ENCODE measurements at regions of chr2 and their contacts with region 1.

Region 1: DNA sequence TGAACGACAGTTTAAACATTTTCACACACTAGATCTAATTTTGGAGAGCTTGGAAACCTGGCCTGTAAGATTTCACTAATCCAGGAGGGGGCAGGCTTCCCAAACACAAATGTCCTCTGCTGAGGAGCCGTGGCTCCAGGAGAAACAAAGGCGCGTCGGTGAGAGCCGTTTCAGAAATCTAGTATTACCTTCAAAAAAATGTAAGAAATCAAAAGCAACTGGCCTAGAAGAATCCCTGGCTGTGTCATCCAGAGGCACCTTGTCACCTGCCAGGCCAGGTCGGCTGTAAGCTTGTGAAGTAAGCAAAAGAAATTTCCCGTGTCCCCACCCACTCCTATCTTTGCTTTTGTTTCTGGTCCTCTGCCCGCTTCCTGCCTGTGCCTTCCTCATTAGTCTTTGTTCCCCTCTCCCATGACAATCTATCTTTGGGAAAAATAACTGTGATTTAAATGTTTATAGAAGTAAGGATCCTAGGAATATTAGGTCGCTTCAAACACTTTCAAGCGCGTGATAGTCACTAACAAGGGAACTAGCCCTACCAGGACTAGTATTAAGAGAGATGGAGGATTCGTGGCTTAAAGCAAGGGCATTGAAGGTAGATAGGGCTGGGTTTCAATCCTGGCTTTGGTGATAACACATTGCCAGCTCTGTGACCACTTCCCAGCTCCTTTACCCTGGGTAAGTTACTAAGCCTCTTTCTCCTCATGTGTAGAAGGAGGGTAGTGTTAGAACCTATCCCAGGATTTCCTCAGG is 99.5 kb upstream of the STK39 start:
- DNase-seq: peak; percentile 45
- ATAC-seq: peak; percentile 92
- H3K4me3 ChIP-seq: peak overlapping the region; percentile 52; the same call in 1 of the 2 replicates
- H3K27ac ChIP-seq: no peak overlapping the region
- H3K4me1 ChIP-seq: peaks cover 9% of the 10 kb centered on the region
- H3K27me3 ChIP-seq: no peaks in the 10 kb centered on the region
- CTCF ChIP-seq: peak; percentile 64 to 86 (median 69)
- EP300 ChIP-seq: no peak
- POLR2A ChIP-seq: no peak
- RAD21 ChIP-seq: peak; percentile 98

Region 2: DNA sequence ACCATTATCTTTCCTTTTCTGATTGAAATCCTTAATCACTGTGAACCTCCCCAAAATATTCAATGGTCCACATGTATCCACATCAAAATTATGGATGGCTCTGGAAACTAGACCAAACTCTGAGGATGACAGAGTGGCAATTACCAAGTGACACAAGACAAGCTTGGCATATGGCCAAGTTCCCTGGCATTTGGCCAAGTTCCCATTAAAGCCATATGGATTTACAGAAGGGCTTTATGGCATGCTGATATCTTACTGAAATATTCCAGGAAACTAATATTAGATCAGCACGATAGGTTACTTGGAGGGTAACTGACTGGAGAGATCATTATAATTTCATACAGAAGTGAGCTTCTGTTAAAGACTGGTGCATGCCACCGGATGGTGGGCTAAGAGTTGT is 87.2 kb after region 1 on chr2:
- CTCF ChIA-PET with region 1: no interaction called
- POLR2A ChIA-PET with region 1: no interaction called
- RAD21 ChIA-PET with region 1: no interaction called
- SMC1A ChIA-PET with region 1: no interaction called
- in situ Hi-C with region 1: no loop called
- intact Hi-C with region 1: loop called (anchors 2 kb)
- DNase-seq: no peak
- ATAC-seq: no peak
- H3K4me3 ChIP-seq: no peak overlapping the region
- H3K27ac ChIP-seq: no peak overlapping the region
- H3K4me1 ChIP-seq: peaks cover 13% of the 10 kb centered on the region; the same call in 1 of the 2 replicates
- H3K27me3 ChIP-seq: no peaks in the 10 kb centered on the region
- CTCF ChIP-seq: no peak
- EP300 ChIP-seq: no peak
- POLR2A ChIP-seq: no peak
- RAD21 ChIP-seq: no peak

Region 3: GRCh38 chr2:168490015-168490874 is 143.3 kb after region 1 on chr2:
- CTCF ChIA-PET with region 1: interaction called, 3 read pairs
- POLR2A ChIA-PET with region 1: no interaction called
- RAD21 ChIA-PET with region 1: interaction called, 7 read pairs
- SMC1A ChIA-PET with region 1: interaction called, 3 read pairs
- in situ Hi-C with region 1: no loop called
- intact Hi-C with region 1: loop called (anchors 2 kb)
- DNase-seq: peak; percentile 92
- ATAC-seq: peak; percentile 95
- H3K4me3 ChIP-seq: peak overlapping the region; percentile 64
- H3K27ac ChIP-seq: peak overlapping the region; percentile 99
- H3K4me1 ChIP-seq: peaks cover 25% of the 10 kb centered on the region
- H3K27me3 ChIP-seq: no peaks in the 10 kb centered on the region
- CTCF ChIP-seq: no peak
- EP300 ChIP-seq: peak; percentile 85 to 87; a peak in 3 of 4 replicates
- POLR2A ChIP-seq: peak; percentile 42
- RAD21 ChIP-seq: peak; percentile 41; the same call in 1 of the 2 replicates

Region 4: GRCh38 chr2:168687314-168687713 is 340.4 kb after region 1 on chr2:
- CTCF ChIA-PET with region 1: interaction called, 21 read pairs
- POLR2A ChIA-PET with region 1: no interaction called
- RAD21 ChIA-PET with region 1: interaction called, 16 read pairs
- SMC1A ChIA-PET with region 1: interaction called, 16 read pairs
- in situ Hi-C with region 1: no loop called
- intact Hi-C with region 1: loop called (anchors 1 kb)
- DNase-seq: no peak
- ATAC-seq: peak; percentile 58
- H3K4me3 ChIP-seq: no peak overlapping the region
- H3K27ac ChIP-seq: no peak overlapping the region
- H3K4me1 ChIP-seq: peaks cover 5% of the 10 kb centered on the region; the same call in 1 of the 2 replicates
- H3K27me3 ChIP-seq: no peaks in the 10 kb centered on the region
- CTCF ChIP-seq: peak; percentile 12 to 43 (median 25); a peak in 4 of 6 replicates
- EP300 ChIP-seq: no peak
- POLR2A ChIP-seq: no peak
- RAD21 ChIP-seq: peak; percentile 62

Region 5: GRCh38 chr2:168705534-168706470 is 358.9 kb after region 1 on chr2:
- CTCF ChIA-PET with region 1: interaction called, 40 read pairs
- POLR2A ChIA-PET with region 1: no interaction called
- RAD21 ChIA-PET with region 1: interaction called, 11 read pairs
- SMC1A ChIA-PET with region 1: interaction called, 11 read pairs
- in situ Hi-C with region 1: loop called (anchors 5 kb)
- intact Hi-C with region 1: loop called (anchors 1 kb)
- DNase-seq: no peak
- ATAC-seq: peak; percentile 65
- H3K4me3 ChIP-seq: no peak overlapping the region
- H3K27ac ChIP-seq: no peak overlapping the region
- H3K4me1 ChIP-seq: peaks cover 3% of the 10 kb centered on the region
- H3K27me3 ChIP-seq: no peaks in the 10 kb centered on the region
- CTCF ChIP-seq: peak; percentile 30 to 45 (median 35); a peak in 4 of 6 replicates
- EP300 ChIP-seq: no peak
- POLR2A ChIP-seq: no peak
- RAD21 ChIP-seq: peak; percentile 61

Region 6: DNA sequence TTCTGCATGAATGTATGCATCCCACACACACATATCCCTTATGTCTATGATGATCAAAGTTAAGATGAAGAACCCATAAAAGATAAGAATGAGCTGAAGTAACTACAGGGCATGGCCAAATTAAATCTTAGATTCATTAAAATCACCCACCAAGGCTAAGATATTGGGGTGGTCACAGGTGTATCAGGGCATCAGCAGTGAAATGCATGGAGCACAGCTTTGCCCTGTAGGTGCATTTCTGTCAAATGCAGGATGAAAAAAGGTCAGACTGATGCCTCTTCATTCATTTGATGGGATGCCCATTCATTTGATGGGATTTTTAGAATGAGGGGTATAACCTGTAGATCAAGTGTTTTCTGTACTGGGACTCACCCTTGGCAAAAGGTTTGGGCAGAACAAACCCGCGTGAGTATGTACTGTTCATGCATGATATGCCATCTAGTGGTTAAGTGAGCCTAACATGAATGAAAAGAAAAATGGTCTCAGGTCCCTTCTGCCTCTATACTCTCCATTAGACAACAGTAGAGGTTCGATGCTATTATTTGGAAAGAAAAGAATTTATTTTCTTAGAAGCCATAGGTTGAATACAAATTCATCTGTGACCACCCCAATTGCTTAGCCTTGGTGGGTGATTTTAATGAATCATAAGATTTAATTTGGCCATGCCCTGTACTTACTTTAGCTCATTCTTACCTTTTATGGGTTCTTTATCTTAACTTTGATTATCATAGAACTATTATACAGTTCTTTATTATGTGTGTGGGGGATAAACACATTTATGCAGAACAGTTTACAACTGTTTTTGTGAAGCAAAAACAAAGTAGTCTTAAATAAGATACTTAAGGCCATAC is 412.3 kb after region 1 on chr2:
- CTCF ChIA-PET with region 1: interaction called, 27 read pairs
- POLR2A ChIA-PET with region 1: no interaction called
- RAD21 ChIA-PET with region 1: interaction called, 14 read pairs
- SMC1A ChIA-PET with region 1: interaction called, 35 read pairs
- in situ Hi-C with region 1: loop called (anchors 5 kb)
- intact Hi-C with region 1: loop called (anchors 1 kb)
- DNase-seq: peak; percentile 16
- ATAC-seq: peak; percentile 96
- H3K4me3 ChIP-seq: no peak overlapping the region
- H3K27ac ChIP-seq: no peak overlapping the region
- H3K4me1 ChIP-seq: peaks cover 5% of the 10 kb centered on the region; the same call in 1 of the 2 replicates
- H3K27me3 ChIP-seq: no peaks in the 10 kb centered on the region
- CTCF ChIP-seq: peak; percentile 52 to 68 (median 55); a peak in 5 of 6 replicates
- EP300 ChIP-seq: no peak
- POLR2A ChIP-seq: no peak
- RAD21 ChIP-seq: peak; percentile 83

Region 7: DNA sequence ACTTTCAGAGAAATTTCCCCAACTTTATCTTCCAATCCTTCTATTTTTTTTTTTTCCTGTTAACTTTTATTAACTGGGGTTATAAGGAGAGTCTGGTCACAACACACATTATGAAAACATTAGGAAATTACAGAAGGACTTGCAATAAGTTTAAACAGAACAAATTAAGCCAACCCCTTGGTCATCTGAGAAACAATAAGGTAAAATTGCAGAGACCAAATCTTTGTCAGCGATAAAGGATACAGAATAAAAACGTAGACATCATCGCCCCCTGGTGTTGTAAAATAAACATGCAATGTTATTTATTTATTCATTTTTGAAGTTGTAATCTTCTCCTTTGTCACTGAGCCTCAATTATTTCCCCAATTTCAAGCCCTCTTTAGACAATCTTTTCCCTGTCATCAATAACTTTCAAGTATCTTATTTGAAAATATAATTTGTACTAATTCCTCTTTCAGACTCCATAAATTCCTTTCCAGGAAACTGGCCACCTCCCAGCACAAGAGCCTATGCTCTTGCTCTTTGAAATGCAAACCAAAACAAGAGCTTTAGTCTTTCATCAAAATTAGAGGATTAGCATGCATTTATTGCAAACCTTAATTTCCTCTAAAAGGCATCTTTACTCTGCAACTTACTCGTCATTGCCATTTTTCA is 573.7 kb after region 1 on chr2:
- CTCF ChIA-PET with region 1: interaction called, 21 read pairs
- POLR2A ChIA-PET with region 1: no interaction called
- RAD21 ChIA-PET with region 1: interaction called, 4 read pairs
- SMC1A ChIA-PET with region 1: no interaction called
- in situ Hi-C with region 1: no loop called
- intact Hi-C with region 1: loop called (anchors 1 kb)
- DNase-seq: no peak
- ATAC-seq: peak; percentile 63
- H3K4me3 ChIP-seq: no peak overlapping the region
- H3K27ac ChIP-seq: no peak overlapping the region
- H3K4me1 ChIP-seq: no peaks in the 10 kb centered on the region
- H3K27me3 ChIP-seq: peaks cover 0 to under 1% of the 10 kb centered on the region in 2 experiments; a peak in 2 of 4 replicates
- CTCF ChIP-seq: peak; percentile 35 to 61 (median 56); a peak in 5 of 6 replicates
- EP300 ChIP-seq: no peak
- POLR2A ChIP-seq: no peak
- RAD21 ChIP-seq: peak; percentile 74

Measured in GM12878 (cell line).